Posterior cingulate gyrus (tissue), 11 donors: ENCODE measurements at regions of chr7 and their contacts with region 1.

Region 1: DNA sequence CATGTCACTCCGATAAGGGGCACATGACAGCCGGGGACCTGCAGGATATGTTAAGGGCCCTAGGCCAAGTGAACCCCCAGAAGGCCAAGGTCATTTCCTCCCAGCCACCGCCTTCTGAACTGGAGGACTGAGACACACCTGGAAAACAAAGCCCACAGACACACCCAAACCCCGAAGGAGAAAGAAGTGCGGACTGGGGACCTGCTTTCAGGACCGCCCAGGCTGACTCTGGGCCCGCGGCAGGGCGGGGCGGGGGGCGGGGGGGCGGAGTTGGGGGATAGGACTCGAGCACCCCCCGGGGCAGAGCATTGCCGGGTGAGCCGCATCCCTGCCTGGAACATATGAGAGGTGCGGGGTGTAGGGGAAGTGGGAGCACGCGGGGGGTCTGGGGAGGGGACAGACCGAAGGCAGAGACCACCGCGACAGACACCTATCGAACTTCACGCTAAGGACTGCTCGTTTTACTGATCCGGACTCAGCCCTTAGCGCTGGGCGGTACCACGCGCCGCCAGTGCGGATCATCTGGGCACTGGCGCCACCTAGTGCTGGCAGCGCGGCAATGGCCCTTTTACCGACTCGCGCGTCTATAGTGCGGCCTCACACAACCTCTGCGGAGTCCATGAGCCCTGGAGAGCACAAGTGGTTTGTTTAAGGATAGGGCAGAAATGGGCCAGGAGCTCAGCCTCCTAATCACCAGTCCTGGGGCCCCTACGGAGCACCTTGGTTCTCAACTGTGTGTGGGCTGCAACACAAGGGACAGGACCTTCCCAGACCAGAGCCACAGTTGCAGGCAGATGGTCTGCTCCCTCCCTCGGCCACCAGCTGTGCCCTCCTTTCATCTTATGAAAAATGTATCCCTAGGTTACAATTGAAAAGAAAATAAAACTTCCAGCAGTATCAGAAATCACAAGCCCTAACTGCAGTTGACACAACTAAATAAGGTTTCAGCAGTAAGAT is 157.6 kb downstream of the HERPUD2 start:
- DNase-seq: peak; percentile 57 to 96 (median 80)

Region 2: GRCh38 chr7:34227525-34227924 is 1309.8 kb before region 1 on chr7:
- intact Hi-C with region 1: no loop called
- DNase-seq: no peak

Region 3: GRCh38 chr7:34612661-34613060 is 924.7 kb before region 1 on chr7:
- intact Hi-C with region 1: no loop called
- DNase-seq: no peak

Region 4: DNA sequence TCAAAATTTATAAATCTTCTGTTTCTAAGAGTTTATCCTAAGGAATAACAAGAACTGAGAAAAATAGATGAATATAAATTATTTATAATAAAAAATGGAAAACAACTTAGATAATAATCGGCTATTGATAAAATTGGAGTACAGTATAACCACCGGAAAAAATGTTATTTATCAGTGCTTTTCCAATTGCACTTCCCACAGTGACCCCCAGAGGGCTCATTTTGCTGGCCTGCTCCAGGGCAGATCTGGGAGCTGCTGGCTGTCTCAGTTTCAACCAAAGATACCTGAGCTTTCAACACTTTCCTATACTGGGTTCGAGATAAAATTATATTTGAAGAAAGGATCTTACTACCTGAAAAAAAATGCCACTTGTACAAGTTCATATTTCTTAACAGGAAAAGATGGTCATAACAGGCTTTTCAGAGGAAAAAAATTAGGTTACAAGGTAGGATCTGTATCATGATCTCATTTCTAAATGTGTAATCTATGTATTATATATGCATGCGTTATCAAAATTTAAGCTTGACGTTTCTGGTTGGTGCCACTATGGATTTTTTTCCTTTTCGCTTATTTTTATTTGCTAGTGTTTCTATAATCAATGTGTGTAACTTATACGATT is 713.6 kb before region 1 on chr7:
- intact Hi-C with region 1: no loop called
- DNase-seq: peak in 9 of 10 donors; percentile 37 to 90 (median 67)

Region 5: GRCh38 chr7:35185907-35186731 is 351.2 kb before region 1 on chr7:
- intact Hi-C with region 1: loop called (anchors 10 kb)
- DNase-seq: peak; percentile 35 to 97 (median 81)

Region 6: DNA sequence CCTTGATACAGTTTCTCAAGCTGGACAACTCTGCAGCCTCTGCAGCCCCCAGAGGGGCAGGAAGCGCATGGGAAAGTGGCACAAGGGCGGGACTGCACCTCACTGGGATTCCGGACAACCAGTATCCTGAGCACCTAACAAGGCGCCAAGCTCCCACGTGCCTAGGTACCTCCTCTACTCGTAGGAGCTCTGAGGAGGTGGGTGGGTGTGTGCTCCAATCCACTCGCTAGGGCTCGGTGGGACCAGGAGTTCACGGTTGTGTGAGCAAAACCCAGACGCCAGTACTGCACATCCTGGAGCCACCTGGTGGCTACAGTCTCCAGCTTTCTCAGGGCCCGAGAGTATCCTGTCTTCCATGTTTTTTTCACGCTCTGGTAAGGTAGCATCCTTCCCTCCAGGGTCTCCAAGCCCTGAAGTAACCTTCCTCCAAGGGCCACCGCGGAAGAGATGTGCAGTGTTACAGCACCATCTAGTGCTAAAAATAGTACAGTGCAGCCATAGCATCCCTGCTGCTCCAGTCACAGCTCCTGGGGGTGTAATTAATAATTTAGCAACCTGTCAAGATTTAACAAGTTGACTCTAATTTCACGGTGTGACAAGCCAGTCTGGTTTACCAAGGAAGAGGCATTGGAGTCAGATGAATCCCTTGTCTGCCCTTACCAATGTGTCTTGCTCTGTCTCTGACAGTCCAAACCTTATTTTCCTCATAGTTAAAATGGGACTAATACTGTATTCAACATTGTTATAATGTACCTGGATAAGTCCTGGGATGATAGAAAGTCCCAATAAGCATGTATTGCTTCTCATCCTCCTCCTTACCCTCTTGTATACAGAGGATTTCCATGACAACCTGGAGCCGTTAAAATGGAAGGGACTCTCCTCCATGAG is 87.2 kb after region 1 on chr7:
- intact Hi-C with region 1: loop called (anchors 10 kb)
- DNase-seq: peak in 4 of 10 donors; percentile 10 to 83 (median 28)

Region 7: GRCh38 chr7:36021367-36021766 is 484.0 kb after region 1 on chr7:
- intact Hi-C with region 1: no loop called
- DNase-seq: no peak